ENCODE measurements at regions of chr2 and their contacts with region 1.

Region 1: GRCh38 chr2:68441179-68441993 is 25.7 kb downstream of the FBXO48 start:
- DNase-seq: peak; percentile 66
- H3K4me3 ChIP-seq: no peak overlapping the region
- H3K27ac ChIP-seq: no peak overlapping the region
- H3K27me3 ChIP-seq: peaks cover 4% of the 10 kb centered on the region
- CTCF ChIP-seq: peak; percentile 87

Region 2: GRCh38 chr2:68121873-68122679 is 319.3 kb before region 1 on chr2:
- CTCF ChIA-PET with region 1: interaction called, 69 read pairs
- POLR2A ChIA-PET with region 1: no interaction called
- DNase-seq: peak; percentile 82
- H3K4me3 ChIP-seq: no peak overlapping the region
- H3K27ac ChIP-seq: no peak overlapping the region
- H3K27me3 ChIP-seq: peaks cover 4% of the 10 kb centered on the region
- CTCF ChIP-seq: peak; percentile 98

Region 3: GRCh38 chr2:68282811-68283418 is 158.5 kb before region 1 on chr2:
- CTCF ChIA-PET with region 1: interaction called, 11 read pairs
- POLR2A ChIA-PET with region 1: no interaction called
- DNase-seq: no peak
- H3K4me3 ChIP-seq: no peak overlapping the region
- H3K27ac ChIP-seq: no peak overlapping the region
- H3K27me3 ChIP-seq: no peaks in the 10 kb centered on the region
- CTCF ChIP-seq: peak; percentile 88

Region 4: DNA sequence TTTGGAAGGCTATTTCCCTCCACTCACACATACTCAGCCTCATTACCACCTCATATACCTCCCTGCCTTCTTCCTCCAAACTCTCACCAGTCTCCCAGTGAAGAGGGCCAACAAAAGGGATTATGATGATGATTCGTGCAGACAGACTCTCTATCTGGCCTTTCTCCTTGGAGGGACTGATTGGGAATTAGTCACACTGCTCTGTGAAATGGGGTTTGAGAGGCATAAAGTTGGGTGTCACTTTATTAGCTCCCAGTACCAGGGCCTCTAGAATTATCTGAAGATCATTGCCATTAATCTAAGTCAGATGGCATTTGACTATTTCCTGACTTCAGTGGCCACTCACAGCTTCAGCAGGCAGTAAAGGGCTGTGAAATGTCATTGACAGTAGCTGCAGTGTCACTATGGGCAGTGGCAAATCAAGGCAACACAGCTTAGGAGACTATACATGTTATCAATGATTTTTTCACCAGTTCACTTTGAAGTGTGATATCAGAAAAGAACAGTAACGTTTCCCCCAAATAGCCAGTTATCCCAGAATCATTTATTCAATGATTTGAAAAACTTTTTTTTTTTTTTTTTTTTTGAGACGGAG is 139.0 kb before region 1 on chr2:
- CTCF ChIA-PET with region 1: interaction called, 12 read pairs
- POLR2A ChIA-PET with region 1: no interaction called
- DNase-seq: no peak
- H3K4me3 ChIP-seq: no peak overlapping the region
- H3K27ac ChIP-seq: no peak overlapping the region
- H3K27me3 ChIP-seq: no peaks in the 10 kb centered on the region
- CTCF ChIP-seq: no peak

Region 5: GRCh38 chr2:68336192-68336591 is 105.2 kb before region 1 on chr2:
- CTCF ChIA-PET with region 1: no interaction called
- POLR2A ChIA-PET with region 1: no interaction called
- DNase-seq: peak; percentile 24
- H3K4me3 ChIP-seq: no peak overlapping the region
- H3K27ac ChIP-seq: no peak overlapping the region
- H3K27me3 ChIP-seq: no peaks in the 10 kb centered on the region
- CTCF ChIP-seq: no peak

Region 6: DNA sequence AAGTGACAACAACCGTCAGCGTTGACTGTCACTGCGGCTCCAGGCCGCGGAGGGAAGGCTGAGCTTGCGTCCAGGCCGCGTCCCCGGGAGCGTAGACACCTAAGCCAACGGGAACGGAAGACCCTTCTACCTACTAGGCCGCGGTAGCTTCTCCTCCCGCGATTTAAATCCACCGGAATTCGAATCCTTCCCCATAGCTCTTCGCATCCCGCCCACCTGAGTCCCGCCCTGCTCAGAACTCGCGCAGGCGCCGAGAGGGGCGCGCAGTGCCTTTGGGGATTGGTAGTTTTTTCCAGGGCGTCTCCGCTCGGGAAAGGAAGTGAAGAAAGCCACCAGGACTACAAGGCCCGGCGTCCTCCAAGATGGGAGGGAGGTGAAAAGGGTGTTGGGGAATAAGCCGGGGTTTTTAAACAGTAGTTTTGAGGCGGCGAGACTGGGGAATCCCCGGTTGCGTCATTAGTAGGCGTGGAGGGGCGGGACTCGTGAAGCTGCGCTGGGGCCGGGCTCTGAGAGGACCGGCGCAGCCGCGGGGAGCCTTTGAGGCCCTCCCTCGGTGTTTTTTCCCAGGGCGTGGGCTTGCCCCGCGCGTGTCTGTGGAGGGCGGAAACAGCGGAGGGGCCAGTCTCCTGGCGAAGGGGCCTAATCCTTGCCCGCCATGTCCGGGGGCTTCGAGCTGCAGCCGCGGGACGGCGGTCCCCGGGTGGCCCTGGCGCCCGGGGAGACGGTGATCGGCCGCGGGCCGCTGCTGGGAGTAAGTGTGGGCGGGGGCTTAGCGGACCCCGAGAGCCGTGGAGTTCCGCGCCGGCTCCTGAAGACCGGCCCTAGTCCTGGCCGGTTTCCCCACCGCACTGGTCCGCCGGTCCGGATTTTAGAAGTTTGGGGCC is 25.9 kb after region 1 on chr2 and contains the starts of genes APLF and FBXO48:
- CTCF ChIA-PET with region 1: interaction called, 16 read pairs
- POLR2A ChIA-PET with region 1: no interaction called
- DNase-seq: peak; percentile 97
- H3K4me3 ChIP-seq: peak within 1 kb of the TSS; percentile 98
- H3K27ac ChIP-seq: peak within 1 kb of the TSS; percentile 77
- H3K27me3 ChIP-seq: no peaks in the 10 kb centered on the region
- CTCF ChIP-seq: no peak
- polyA plus RNA-seq, gene APLF: 2.5 and 3.6 TPM in 2 replicates
- polyA plus RNA-seq, gene FBXO48: 0.66 and 0.89 TPM in 2 replicates

Region 7: DNA sequence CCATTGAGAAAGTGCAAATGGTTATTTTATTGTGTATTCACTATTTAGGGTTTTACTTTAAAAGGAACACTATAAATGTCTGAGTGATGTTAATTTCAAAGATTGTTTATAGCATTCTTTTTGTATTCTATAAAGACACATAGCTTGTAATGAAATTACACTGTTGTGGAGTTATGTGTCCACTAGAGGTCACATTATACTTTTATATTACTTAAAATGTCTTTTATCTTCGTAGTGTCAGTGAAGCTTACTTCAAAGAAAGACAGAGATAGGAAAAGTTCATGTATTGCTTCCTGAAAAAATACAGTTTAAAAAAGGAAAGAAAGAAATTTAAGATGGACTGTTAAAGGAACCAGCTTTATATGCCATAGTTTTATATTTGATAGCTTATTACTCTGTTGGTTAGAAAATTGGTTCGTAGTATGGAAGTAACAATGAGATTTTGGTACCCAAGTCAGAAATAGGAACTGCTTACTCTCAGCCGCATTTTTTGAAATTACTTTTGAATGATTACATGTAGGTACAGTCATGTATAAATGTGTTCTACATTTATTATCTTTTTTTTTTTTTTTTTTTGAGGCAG is 46.5 kb after region 1 on chr2:
- CTCF ChIA-PET with region 1: no interaction called
- POLR2A ChIA-PET with region 1: no interaction called
- DNase-seq: no peak
- H3K4me3 ChIP-seq: no peak overlapping the region
- H3K27ac ChIP-seq: no peak overlapping the region
- H3K27me3 ChIP-seq: no peaks in the 10 kb centered on the region
- CTCF ChIP-seq: peak; percentile 49

Measured in AG04450 (cell line).